Mammary epithelial cell (primary cell): ENCODE measurements at regions of chr15 and their contacts with region 1.

Region 1: GRCh38 chr15:90412356-90413194 is 24.5 kb downstream of the IQGAP1 start:
- DNase-seq: peak; percentile 97
- H3K4me3 ChIP-seq: peak overlapping the region in 1 of 3 experiments; percentile 29
- H3K27ac ChIP-seq: peak overlapping the region; percentile 79
- H3K4me1 ChIP-seq: peaks cover 51% of the 10 kb centered on the region
- H3K27me3 ChIP-seq: no peaks in the 10 kb centered on the region
- CTCF ChIP-seq: no peak

Region 2: DNA sequence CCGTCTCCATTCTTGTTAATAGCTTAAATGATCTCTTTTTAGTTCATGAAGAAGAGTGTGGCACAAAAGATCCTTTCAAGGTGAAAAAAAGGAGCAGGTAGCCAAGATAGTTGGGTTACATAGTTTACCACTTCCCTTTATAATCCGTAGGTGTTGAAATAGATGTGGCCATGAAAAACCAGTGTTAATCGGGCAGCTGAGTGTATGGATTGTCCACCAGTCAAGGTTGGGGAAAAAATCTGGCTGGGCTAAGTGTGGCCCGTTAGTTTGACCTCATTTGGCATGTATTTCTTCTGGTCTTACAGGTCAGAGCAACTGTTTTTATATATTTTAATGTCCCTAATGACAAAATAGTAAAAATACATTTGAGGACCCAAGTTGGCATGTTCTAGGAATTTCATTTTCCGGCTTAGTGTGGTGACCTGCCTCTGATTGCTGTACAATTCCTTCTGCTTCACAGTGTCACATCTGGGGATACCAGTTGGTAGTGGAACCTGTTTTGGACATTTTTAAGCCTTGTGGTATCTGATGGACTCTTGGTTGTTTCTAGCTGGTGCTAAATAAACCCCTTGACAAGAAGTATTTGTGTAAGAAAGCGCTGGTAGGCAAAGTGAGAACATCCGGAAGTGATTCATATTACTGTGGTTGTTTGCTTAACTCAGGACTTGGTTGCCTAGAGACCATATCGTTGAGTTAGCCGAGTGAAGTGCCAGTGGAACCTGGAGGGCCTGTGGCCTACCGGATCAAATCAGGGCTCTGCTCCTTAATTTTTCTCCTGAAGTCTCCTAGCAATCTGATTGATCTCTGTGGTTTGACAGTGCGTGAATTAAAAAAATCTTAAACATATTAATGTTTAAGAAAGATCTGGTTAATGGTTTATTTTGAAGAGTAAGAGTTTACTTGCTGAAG is 11.9 kb before region 1 on chr15:
- CTCF ChIA-PET with region 1: no interaction called
- dilution Hi-C with region 1: no loop called
- in situ Hi-C with region 1: no loop called
- intact Hi-C with region 1: loop called (anchors 1 kb)
- DNase-seq: peak; percentile 91
- H3K4me3 ChIP-seq: peak overlapping the region; percentile 8 to 31 (median 12)
- H3K27ac ChIP-seq: peak overlapping the region; percentile 95
- H3K4me1 ChIP-seq: peaks cover 44% of the 10 kb centered on the region
- H3K27me3 ChIP-seq: no peaks in the 10 kb centered on the region
- CTCF ChIP-seq: no peak

Region 3: DNA sequence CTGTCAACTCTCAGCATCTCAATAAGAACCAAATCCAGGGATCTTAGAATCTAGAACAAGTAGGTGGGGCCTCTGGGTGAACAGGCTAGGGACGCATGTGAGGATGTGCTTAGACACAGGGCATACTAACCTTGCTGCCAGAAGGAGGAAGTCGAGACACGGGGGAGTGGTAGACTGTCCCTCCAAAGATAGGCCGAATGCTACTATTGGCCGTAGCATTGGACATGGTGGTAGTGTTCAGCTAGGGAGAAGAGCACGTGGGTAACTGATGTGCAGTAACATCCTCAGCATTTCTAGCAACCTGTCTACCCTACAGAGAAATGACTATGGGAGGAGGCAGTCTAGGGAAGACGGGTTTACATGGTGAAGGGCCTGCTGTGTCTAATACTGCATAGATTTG is 557.7 kb after region 1 on chr15:
- CTCF ChIA-PET with region 1: no interaction called
- dilution Hi-C with region 1: no loop called
- in situ Hi-C with region 1: no loop called
- intact Hi-C with region 1: no loop called
- DNase-seq: no peak
- H3K4me3 ChIP-seq: no peak overlapping the region
- H3K27ac ChIP-seq: no peak overlapping the region
- H3K4me1 ChIP-seq: peaks cover 10% of the 10 kb centered on the region
- H3K27me3 ChIP-seq: no peaks in the 10 kb centered on the region
- CTCF ChIP-seq: no peak